Head of caudate nucleus (tissue), 42 donors: ENCODE measurements at regions of chr14 and their contacts with region 1.

Region 1: DNA sequence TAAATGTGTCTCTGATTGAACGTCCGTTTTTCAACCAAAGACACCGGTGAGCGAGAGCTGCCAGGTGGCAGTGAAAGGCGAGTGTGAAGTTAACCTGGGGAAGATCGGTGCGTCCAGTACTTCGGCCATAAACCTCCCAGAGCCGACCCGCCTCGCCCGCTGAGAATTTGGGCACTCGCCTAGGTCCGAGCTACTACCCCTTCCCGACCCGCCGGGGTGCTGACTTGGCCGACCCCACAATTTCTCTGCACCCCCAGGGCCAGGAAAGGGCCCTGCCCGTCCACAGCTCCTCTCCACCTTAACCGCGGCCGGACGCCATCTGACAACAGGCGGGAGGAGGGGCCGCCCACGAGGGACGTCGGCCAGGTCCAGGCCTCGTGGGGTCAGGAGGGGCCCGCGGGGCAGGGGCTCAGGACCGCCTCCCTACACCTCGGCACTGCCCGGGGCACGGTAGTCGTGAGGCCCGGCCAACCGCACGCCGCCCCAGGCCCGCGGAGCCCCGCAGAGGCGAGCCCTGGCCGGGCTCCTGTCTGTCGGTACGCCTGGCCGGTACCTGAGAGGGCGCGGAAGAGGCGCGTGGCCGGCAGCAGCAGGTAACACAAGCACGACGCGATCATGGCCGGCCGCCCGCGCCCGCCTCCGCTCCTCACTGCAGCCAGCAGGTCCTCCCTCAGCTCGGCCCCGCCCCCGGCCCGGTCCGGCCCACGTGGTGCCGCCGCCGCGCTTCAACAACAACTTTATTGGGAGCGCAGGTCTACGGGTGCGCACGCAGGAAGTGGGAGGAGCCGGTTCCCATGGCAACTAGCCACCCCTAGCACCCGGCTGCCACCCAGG is at the start of gene ANGEL1:
- DNase-seq: peak; percentile 83 to 97 (median 94)

Region 2: GRCh38 chr14:76761136-76761959 is 51.1 kb before region 1 on chr14 and contains the start of gene VASH1:
- intact Hi-C with region 1: loop called (anchors 5 kb)
- DNase-seq: peak in 41 of 42 donors; percentile 36 to 91 (median 84)

Region 3: DNA sequence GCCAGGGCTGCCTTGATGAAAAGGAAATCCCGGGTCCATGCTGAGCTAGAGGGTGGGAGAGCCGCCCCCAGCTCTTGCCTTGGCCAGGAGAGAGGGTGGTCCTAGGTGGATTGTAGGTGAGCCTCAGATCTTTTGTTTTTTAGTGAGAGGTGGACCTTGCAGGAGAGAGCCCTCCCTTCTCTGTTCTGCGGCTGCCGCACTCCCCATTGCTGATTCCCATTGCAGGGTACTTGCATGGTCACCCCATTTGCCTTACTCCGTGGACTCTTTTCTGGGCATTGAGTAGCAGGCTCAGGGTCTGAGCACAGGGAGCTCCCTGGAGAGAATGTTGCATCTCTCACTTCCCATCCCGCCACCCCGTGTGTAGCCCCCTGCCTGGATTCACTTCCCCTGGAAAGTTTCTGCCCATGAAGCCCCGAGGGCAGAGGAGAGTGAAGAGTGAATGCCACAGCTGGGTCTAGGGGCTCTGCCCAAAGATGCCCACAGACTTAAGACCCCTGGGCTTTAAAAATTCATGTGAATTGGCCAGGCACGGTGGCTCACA is 40.9 kb before region 1 on chr14:
- intact Hi-C with region 1: no loop called
- DNase-seq: peak in 9 of 42 donors; percentile 3 to 44 (median 15)